Panc1 (cell line): ENCODE measurements at regions of chr20 and their contacts with region 1.

Region 1: GRCh38 chr20:59912609-59913008 is 20.8 kb downstream of the SYCP2 start:
- DNase-seq: no peak
- ATAC-seq: no peak
- H3K4me3 ChIP-seq: no peak overlapping the region
- H3K27ac ChIP-seq: no peak overlapping the region
- H3K4me1 ChIP-seq: no peaks in the 10 kb centered on the region
- H3K27me3 ChIP-seq: no peaks in the 10 kb centered on the region
- CTCF ChIP-seq: no peak

Region 2: DNA sequence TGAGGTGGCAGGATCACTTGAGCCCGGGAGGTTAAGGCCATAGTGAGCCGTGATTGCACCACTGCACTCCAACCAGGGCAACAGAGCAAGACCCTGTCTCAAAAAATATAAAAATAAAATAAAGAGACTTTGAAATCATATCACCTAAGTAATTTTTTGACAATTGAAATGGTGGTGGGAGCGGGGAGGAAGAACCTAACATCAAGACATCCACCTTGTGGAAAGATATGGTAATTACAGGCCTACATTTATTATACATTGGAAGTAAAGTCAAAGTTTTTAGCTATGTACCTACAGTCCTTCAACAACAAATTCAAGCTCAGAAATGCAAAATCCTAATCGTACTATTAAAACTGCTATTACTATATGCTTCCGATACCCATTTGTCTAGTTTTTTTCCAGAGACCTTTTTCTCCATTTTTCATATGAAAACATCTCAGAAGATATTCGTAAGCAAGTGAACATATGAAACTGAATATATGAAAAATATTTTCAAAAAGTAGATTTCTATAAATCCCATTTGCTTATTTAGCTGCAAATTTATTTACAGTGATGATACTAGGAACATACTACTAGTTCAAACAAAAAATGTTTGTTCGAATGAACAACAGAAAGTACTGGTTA is 62.5 kb before region 1 on chr20:
- CTCF ChIA-PET with region 1: no interaction called
- POLR2A ChIA-PET with region 1: interaction called, 13 read pairs
- in situ Hi-C with region 1: no loop called
- intact Hi-C with region 1: no loop called
- DNase-seq: no peak
- ATAC-seq: peak; percentile 68; the same call in 1 of the 2 replicates
- H3K4me3 ChIP-seq: no peak overlapping the region
- H3K27ac ChIP-seq: no peak overlapping the region
- H3K4me1 ChIP-seq: 0 out of 2 replicates have a peak, but pooled peaks cover 3% of the 10 kb centered on the region
- H3K27me3 ChIP-seq: no peaks in the 10 kb centered on the region
- CTCF ChIP-seq: peak; percentile 70